ENCODE measurements at regions of chr10 and their contacts with region 1.

Region 1: DNA sequence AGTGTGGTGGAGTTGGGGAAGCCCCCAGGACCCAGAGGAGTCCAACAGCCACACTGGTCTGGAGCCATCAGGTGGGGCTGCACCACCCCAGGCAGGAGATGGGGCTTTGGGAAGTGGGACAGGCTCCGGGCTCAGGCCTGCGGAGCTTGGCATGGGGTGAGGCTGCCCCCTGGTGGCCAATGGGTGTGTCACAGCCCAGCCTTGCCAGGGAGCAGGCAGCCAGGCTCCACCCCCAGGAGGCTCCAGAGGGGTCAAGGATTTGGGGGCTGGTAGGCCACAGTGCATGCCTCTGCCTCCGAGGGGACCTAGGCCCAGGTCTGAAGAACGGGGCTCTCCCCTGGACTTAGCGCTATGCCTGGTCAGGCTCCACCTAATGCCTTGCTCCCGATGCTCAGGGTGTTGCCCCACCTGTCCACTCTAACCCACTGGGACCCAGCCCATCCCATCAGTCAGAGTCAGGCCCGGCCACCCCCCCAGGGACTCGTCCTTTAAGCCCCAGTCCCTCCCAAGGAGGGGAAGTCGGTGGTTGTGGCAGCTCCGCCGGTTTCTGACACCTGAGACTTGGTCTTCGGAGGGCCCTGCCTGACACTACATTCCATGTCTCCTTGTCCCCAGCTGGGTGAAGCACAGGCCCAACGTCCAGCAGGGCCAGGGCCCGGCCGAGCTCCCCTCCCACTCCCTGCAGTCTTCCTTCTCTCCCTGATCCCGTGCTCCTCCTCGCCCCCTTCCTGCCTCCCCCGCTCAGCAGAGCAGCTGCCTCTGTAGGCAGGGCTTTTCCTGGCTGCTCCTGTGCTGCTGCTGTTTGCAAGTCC is 11.3 kb upstream of the SAMD8 start:
- DNase-seq: peak; percentile 87
- H3K4me3 Mint-ChIP-seq: no peak overlapping the region
- H3K27ac Mint-ChIP-seq: no peak overlapping the region
- H3K4me1 Mint-ChIP-seq: no peaks in the 10 kb centered on the region
- H3K27me3 Mint-ChIP-seq: no peaks in the 10 kb centered on the region

Region 2: DNA sequence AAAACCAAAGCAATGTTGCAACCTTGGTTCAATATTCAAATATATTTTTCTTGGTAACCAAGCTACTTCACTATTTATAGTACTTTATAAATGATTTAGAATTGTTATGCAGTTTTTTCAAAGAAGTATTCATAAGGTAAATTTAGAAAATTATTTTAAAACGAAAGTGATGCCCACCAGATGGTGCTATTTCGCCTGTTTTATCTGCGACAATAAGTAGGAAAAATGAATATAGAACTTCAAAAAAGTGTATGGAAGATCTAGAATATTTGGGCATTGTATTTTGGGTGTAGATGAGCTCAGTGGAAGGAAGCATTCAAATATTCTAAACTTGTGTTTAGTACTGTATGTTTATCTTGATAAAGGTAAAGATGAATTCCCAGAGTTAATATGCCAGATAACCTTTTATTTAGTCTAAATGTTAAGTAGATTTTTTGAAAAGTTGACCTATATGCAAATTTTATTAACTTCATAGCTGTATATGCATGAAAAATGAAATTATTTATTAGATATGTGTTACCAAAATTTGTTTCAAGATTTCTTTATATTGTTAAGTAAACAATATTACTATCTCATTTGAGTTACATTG is 856.0 kb before region 1 on chr10:
- CTCF ChIA-PET with region 1: interaction called, 3 read pairs
- intact Hi-C with region 1: loop called (anchors 1 kb)
- DNase-seq: peak; percentile 38
- H3K4me3 Mint-ChIP-seq: no peak overlapping the region
- H3K27ac Mint-ChIP-seq: no peak overlapping the region
- H3K4me1 Mint-ChIP-seq: no peaks in the 10 kb centered on the region
- H3K27me3 Mint-ChIP-seq: no peaks in the 10 kb centered on the region

Region 3: GRCh38 chr10:74262856-74263255 is 837.3 kb before region 1 on chr10:
- CTCF ChIA-PET with region 1: no interaction called
- intact Hi-C with region 1: loop called (anchors 1 kb)
- DNase-seq: no peak
- H3K4me3 Mint-ChIP-seq: no peak overlapping the region
- H3K27ac Mint-ChIP-seq: no peak overlapping the region
- H3K4me1 Mint-ChIP-seq: peaks cover 26% of the 10 kb centered on the region
- H3K27me3 Mint-ChIP-seq: no peaks in the 10 kb centered on the region

Region 4: DNA sequence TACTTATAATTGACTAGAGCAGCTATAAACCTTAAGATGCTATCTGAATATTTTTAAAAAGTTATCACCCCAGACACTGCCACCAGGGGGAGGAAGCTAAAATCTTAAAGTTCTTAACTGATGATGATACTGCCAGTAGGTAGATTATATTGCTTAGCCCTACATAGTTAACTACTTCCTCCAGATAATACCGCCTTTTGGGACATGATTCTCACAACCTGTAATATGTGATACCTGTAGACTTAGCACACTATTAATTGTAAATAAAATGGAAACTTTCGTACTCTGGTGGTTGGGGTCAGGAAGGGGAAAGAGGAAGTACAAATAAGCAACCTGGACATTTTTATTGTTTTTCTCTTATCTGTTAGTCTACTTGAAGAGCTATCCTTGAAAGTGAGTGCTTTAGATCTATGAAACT is 680.2 kb before region 1 on chr10:
- CTCF ChIA-PET with region 1: interaction called, 3 read pairs
- intact Hi-C with region 1: loop called (anchors 10 kb)
- DNase-seq: peak; percentile 55
- H3K4me3 Mint-ChIP-seq: no peak overlapping the region
- H3K27ac Mint-ChIP-seq: no peak overlapping the region
- H3K4me1 Mint-ChIP-seq: peaks cover 6% of the 10 kb centered on the region
- H3K27me3 Mint-ChIP-seq: no peaks in the 10 kb centered on the region

Region 5: GRCh38 chr10:74738985-74739567 is 361.1 kb before region 1 on chr10:
- CTCF ChIA-PET with region 1: interaction called, 4 read pairs
- intact Hi-C with region 1: loop called (anchors 2 kb)
- DNase-seq: peak; percentile 46
- H3K4me3 Mint-ChIP-seq: no peak overlapping the region
- H3K27ac Mint-ChIP-seq: no peak overlapping the region
- H3K4me1 Mint-ChIP-seq: peaks cover 13% of the 10 kb centered on the region
- H3K27me3 Mint-ChIP-seq: no peaks in the 10 kb centered on the region

Region 6: DNA sequence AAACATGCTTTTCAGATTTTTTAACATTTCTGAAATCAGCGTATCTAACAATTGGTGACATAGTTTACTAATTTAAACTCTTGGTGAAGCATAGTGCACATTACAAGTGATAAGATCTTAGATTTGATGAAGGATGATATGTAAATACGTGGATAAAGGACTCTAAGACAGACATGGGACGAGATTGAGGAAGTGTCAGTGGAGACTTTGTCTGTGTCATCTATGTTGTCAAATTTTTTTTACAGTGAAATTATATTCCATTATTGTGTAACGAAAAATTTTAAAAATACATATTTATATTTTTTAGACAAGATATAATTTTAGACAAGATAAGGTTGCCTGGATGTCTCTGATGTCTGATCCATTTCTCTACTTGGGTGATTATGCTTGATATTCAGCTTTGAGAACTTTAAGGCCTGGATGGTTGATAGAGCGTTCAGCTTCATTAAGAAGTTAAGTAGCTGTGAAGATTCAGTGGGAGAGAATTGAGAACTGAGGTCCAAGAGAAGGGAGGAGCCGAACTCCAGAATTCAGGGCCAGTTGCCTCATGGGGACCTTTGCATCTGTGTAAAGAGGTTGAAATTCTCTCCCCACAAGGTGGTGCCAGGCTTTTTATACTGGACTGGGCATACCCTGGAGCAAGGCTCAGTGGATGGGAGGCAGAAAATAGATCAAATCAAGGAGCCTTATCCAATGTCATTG is 211.0 kb before region 1 on chr10:
- CTCF ChIA-PET with region 1: no interaction called
- intact Hi-C with region 1: loop called (anchors 5 kb)
- DNase-seq: peak; percentile 38
- H3K4me3 Mint-ChIP-seq: no peak overlapping the region
- H3K27ac Mint-ChIP-seq: no peak overlapping the region
- H3K4me1 Mint-ChIP-seq: peaks cover 32% of the 10 kb centered on the region
- H3K27me3 Mint-ChIP-seq: no peaks in the 10 kb centered on the region

Region 7: DNA sequence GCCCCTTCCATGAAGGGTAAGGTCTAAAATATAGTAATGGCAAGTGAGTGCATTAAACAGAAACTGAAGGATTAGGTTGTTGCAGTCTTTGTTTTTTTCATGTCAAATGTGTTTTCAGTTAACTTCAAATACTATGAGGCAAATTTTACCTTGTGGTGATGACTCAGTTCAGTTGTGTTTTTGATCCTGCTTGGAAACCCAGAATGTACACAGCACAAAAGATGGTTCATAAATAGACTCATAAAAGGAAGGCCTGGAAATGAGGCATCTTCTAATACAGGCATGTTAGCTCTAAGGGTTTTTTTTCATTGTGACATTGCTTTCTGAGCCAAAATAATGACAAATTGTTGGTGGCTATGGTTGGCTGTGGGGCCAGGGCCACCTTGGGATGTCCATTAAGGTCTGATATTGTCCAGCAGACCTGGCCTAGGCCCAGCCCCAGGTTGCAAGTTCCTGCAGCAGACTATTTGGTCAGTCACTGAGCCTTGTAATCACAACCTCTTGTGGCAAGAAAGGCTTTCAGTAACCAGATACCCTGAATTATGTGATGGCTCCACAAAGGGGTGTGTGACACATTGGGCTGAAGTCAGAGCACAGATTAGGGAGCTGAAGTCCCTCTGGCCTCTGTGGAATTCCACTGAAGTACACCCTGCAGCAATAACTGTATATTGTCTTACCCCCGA is 57.7 kb before region 1 on chr10:
- CTCF ChIA-PET with region 1: no interaction called
- intact Hi-C with region 1: loop called (anchors 5 kb)
- DNase-seq: peak; percentile 30
- H3K4me3 Mint-ChIP-seq: peak overlapping the region; percentile 20
- H3K27ac Mint-ChIP-seq: peak overlapping the region; percentile 87
- H3K4me1 Mint-ChIP-seq: peaks cover 45% of the 10 kb centered on the region
- H3K27me3 Mint-ChIP-seq: peaks cover 7% of the 10 kb centered on the region

Region 8: GRCh38 chr10:75079436-75080083 is 20.6 kb before region 1 on chr10:
- CTCF ChIA-PET with region 1: no interaction called
- intact Hi-C with region 1: no loop called
- DNase-seq: no peak
- H3K4me3 Mint-ChIP-seq: no peak overlapping the region
- H3K27ac Mint-ChIP-seq: no peak overlapping the region
- H3K4me1 Mint-ChIP-seq: peaks cover 6% of the 10 kb centered on the region
- H3K27me3 Mint-ChIP-seq: no peaks in the 10 kb centered on the region